ENCODE measurements at regions of chr3 and their contacts with region 1.

Region 1: DNA sequence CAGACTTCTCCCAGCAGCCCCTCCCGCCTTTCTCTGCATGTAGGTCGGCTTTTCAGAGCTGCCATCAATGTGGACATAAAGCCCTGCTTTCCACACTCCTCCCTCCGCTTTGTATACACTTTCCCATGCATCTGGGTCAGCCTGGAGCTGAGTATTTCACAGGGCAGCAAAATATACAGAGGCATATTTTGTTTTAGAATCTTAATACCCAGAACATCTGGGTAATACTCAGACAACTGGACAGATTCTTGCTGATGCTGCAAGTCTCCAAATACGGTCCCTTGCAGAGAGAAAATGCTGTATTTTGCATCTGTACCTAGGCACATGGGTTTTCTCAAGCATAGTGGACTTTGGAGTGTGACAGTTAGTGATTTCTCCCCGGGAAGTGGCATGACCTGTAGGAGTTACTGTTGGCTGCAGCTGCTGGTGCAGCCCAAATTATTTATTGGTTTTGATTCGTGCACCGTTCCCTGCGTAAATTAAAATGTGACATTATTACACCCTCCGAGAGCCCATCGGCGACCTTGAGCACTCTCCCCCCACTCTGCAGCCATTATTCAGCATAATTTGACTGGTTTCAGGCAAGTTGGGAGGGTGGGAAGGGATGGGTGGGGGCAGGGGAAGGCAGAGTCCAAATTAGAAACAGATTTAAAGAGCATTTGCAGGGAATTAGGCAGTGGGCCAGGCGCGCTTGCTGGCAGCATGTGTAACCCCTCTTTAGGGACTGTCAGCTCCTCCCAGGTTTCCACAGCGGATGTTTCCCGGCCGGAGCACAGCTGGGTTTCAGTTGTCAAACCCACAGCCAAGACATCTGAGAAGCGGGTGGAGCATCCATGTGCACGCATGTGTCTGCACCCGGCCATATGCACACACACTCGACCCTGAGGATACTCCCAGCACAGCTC is 100.8 kb downstream of the CPN2 start:
- DNase-seq: peak; percentile 83 to 93 (median 88)
- ATAC-seq: peak; percentile 50 to 82 (median 72)
- H3K4me3 ChIP-seq: peak overlapping the region in 5 of 12 donors; percentile 4 to 23 (median 19)
- H3K27ac ChIP-seq: peak overlapping the region in 3 of 12 donors; percentile 9 to 29 (median 12)
- H3K4me1 ChIP-seq: peaks cover 3 to 38% (median 28%) of the 10 kb centered on the region in 12 donors
- H3K27me3 ChIP-seq: no peaks in the 10 kb centered on the region
- CTCF ChIP-seq: no peak
- POLR2A ChIP-seq: no peak

Region 2: DNA sequence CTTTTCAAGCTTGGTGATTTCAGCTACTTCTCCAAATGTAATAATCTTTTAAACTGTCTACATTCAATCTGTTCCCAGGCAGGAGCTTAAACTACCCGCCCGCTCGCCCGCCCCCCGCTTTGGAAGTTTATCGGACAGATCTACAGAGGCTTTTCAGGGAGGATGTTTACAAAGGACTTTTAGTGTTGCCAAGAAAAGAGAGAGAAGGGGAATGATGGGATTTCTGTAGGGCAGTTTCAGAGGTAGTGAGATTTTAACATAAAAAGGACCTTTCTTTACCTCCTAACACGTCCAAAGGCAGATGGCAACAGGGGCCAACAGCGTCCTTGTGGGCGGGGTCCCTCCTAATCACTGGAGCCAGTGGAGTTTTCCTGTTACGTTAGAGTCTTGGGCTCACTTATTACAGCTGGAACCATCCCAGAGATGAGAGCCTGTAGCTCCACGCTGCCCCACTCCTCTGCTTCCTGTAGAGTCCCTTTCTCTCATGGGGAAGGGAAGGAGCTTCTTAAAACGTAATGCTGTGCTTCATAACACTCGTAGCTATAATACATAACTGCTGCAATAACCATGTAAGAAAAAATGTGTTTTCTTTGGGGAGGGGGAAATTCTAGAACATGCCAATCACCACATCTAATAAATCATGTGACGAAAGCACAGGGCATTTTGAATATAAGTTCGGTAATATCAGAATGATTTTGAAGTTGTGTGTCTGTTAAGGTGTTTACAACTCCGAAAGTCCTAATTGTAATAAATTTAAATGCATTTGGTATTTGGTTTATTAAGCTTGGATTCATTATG is 83.5 kb before region 1 on chr3:
- intact Hi-C with region 1: loop called in 2 of 10 experiments (anchors 5 kb)
- DNase-seq: peak in 3 of 5 donors; percentile 14 to 41 (median 37)
- ATAC-seq: peak in 3 of 4 donors; percentile 63 to 87 (median 74)
- H3K4me3 ChIP-seq: no peak overlapping the region
- H3K27ac ChIP-seq: no peak overlapping the region
- H3K4me1 ChIP-seq: peaks cover 0 to 21% (median 12%) of the 10 kb centered on the region in 12 donors
- H3K27me3 ChIP-seq: peaks cover 0 to 17% (median 0%) of the 10 kb centered on the region in 9 donors
- CTCF ChIP-seq: no peak
- POLR2A ChIP-seq: no peak